Activated CD4-positive, alpha-beta T cell treated with anti-CD3 and anti-CD28 coated beads for 36 hours (primary cell): ENCODE measurements at regions of chr14 and their contacts with region 1.

Region 1: DNA sequence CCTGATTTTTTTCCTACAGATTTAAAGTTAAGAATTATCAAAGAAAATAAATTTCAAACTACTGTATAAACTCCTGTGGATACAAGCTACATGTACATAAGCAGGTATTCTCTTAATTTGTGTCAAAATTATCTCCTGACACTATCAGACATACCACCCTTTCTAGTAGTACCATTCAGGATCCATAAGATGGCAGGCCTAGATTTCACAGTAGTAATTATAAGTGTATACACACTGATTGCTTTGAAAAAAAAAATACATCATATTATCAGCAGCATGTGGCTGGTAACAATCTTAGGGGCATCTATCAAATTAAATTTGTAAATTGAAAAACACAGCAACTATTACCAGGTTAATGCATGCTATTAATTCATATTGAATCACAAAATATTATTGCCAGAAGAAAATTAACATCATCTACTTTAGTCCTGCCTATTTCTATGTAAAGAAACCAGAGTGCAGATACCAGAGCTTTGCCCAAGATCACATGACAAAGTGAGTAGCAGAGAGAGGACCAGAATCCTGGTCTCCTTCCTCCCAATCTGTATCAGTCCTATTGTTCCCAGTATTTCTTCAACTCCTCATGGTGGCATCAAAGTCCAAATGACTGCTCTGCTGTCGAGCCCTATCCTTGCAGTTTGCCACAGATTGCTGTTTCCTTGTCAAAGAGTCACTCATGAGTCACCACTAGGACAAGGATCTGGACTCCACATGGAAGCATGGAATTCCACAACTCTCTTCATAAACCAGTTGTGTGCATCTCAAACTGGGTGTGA is 27.7 kb upstream of the CALM1 start:
- DNase-seq: no peak
- ATAC-seq: peak; percentile 66
- H3K4me3 Mint-ChIP-seq: no peak overlapping the region
- H3K27ac Mint-ChIP-seq: no peak overlapping the region
- H3K4me1 Mint-ChIP-seq: no peaks in the 10 kb centered on the region
- H3K27me3 Mint-ChIP-seq: peaks cover 2% of the 10 kb centered on the region

Region 2: DNA sequence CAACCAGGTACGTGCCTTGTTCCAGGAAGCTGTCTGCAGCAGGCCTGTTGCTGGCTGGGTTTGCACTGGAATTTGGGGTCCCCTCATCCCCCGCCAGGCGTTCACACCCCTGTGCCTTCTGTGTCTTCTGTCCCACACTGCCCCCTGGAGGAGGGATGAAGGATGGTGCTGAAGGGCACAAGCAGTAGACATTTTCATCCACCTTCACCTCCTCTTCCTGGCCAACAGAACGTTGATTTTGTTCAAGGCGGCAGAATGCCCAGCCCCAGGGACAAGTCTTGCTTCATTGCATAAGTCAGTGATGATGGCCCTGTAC is 149.8 kb after region 1 on chr14:
- CTCF ChIA-PET with region 1: interaction called, 3 read pairs
- POLR2A ChIA-PET with region 1: no interaction called
- intact Hi-C with region 1: loop called in 1 of 2 experiments (anchors 1 kb)
- DNase-seq: peak; percentile 68
- ATAC-seq: peak; percentile 76
- H3K4me3 Mint-ChIP-seq: no peak overlapping the region
- H3K27ac Mint-ChIP-seq: no peak overlapping the region
- H3K4me1 Mint-ChIP-seq: no peaks in the 10 kb centered on the region
- H3K27me3 Mint-ChIP-seq: no peaks in the 10 kb centered on the region